Mammary epithelial cell (primary cell): ENCODE measurements at regions of chr15 and their contacts with region 1.

Region 1: GRCh38 chr15:66841953-66842681 is 140.1 kb downstream of the SMAD6 start:
- DNase-seq: peak; percentile 86
- H3K4me3 ChIP-seq: peak overlapping the region; percentile 14 to 42 (median 40)
- H3K27ac ChIP-seq: peak overlapping the region; percentile 50
- H3K4me1 ChIP-seq: peaks cover 12% of the 10 kb centered on the region
- H3K27me3 ChIP-seq: no peaks in the 10 kb centered on the region
- CTCF ChIP-seq: no peak

Region 2: DNA sequence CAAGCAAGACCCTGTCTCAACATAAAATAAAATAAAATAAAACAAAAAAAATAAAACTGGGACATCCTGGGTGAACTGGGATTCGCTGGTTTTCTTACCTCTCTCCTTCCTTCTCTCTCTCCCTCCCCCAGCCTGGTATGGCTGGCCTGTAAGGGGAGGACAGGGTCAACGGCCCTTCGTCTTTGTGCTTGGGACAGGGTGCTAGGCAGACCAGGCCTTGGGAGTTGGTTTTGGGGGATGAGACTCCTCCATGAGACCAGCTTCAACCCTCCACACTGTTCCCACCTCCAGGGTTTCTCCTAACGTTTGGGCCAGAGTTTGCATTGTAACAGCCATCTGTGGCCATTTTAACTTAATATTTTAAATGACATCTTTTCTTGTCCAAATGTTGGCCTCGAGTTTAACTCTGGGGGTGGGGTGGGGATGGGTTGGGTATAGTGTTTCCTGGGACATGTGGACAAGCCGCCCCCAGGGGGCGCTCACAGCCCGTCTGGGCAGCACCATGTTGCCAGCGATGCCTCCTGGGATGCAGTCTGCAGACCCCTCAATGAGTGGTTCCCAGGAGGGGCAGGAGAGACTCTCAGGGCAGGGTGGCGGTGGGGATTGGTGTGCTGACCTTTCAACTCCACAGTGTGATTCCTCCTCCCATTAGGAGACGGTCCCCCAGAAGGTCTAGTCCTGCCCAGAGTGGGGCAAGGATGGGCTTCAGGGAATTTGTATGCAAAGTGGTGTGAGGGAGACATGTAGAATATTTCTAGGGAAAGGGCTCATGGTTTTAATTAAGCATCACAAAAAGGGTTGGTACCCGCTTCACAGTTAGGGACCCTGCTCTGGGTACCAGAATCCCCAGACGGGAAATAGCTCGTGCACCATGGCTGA is 238.6 kb before region 1 on chr15:
- CTCF ChIA-PET with region 1: no interaction called
- dilution Hi-C with region 1: no loop called
- in situ Hi-C with region 1: loop called in 1 of 2 experiments (anchors 10 kb)
- intact Hi-C with region 1: no loop called
- DNase-seq: peak; percentile 17
- H3K4me3 ChIP-seq: no peak overlapping the region
- H3K27ac ChIP-seq: no peak overlapping the region
- H3K4me1 ChIP-seq: no peaks in the 10 kb centered on the region
- H3K27me3 ChIP-seq: no peaks in the 10 kb centered on the region
- CTCF ChIP-seq: peak; percentile 51 to 85

Region 3: DNA sequence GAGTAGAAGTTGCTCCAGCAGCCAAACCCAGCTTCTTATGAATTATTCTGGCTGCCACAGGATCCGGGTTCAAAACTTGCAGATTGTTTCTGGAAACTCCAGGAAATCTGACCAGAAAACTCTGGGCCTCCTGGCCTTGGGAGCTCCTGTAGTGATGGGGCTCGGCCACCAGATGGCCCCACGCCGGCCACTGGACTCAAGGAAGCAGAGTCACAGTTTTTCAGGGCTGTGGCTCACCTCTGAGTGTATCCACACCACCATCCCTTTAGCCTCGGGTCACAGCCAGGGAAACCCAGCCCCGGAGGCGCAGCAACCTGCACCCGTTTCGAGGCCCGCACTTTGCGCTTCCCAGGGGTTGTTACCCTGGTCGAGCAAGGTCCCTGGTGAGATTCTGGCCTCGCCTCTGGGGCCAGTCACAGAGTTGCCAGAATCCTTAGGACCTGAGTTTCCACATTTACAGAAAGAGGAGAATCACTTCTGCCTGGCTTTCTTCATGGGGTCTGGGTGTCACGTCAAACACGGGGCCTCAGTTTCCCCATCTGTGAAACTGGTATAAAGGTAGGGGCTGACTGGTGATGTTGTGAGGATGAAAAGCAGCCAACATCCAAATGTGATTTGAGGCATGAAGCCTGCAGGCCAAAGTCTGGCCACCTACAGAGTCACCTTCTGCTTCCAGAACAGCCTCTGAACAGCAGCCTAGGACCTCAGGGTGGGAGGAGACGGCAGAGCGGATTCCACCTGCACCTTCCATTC is 222.8 kb before region 1 on chr15:
- CTCF ChIA-PET with region 1: no interaction called
- dilution Hi-C with region 1: loop called (anchors 5 kb)
- in situ Hi-C with region 1: loop called in 1 of 2 experiments (anchors 10 kb)
- intact Hi-C with region 1: no loop called
- DNase-seq: peak; percentile 57
- H3K4me3 ChIP-seq: no peak overlapping the region
- H3K27ac ChIP-seq: no peak overlapping the region
- H3K4me1 ChIP-seq: peaks cover 4% of the 10 kb centered on the region
- H3K27me3 ChIP-seq: peaks cover 11% of the 10 kb centered on the region
- CTCF ChIP-seq: peak; percentile 77 to 92

Region 4: DNA sequence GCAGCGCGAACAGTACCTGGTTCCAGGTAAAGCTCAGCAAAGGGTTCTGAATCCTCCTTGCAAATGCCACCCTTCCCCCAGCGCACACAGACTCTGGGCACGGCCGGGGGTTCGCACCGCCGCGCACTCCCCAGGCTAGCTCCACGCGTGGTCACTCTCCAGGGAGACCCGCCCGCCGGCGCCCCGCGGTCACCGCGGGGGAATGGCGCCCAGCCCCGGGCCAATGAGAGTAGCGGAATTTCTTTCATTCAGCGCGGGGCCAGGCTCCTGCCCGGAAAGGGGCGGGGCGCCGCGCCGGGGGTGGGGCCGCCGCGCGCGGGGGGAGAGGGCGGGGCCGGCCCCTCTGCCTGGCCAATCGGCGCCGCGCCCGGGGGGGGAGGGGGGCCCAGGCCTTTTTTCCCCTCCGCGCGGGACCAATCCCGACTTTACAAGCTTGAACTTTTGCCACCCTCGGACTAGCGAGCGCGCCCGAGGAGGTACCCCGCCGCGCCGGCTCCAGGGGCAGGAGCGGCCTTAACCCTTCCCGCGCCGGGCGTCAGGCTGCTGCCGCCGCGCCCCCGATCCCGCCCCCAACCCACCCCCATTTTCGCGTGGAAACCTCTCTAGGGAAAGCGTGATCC is 141.2 kb before region 1 on chr15:
- CTCF ChIA-PET with region 1: no interaction called
- dilution Hi-C with region 1: no loop called
- in situ Hi-C with region 1: no loop called
- intact Hi-C with region 1: loop called (anchors 2 kb)
- DNase-seq: peak; percentile 89
- H3K4me3 ChIP-seq: peak overlapping the region; percentile 56 to 65 (median 62)
- H3K27ac ChIP-seq: no peak overlapping the region
- H3K4me1 ChIP-seq: peaks cover 30% of the 10 kb centered on the region
- H3K27me3 ChIP-seq: peaks cover 8% of the 10 kb centered on the region
- CTCF ChIP-seq: no peak

Region 5: DNA sequence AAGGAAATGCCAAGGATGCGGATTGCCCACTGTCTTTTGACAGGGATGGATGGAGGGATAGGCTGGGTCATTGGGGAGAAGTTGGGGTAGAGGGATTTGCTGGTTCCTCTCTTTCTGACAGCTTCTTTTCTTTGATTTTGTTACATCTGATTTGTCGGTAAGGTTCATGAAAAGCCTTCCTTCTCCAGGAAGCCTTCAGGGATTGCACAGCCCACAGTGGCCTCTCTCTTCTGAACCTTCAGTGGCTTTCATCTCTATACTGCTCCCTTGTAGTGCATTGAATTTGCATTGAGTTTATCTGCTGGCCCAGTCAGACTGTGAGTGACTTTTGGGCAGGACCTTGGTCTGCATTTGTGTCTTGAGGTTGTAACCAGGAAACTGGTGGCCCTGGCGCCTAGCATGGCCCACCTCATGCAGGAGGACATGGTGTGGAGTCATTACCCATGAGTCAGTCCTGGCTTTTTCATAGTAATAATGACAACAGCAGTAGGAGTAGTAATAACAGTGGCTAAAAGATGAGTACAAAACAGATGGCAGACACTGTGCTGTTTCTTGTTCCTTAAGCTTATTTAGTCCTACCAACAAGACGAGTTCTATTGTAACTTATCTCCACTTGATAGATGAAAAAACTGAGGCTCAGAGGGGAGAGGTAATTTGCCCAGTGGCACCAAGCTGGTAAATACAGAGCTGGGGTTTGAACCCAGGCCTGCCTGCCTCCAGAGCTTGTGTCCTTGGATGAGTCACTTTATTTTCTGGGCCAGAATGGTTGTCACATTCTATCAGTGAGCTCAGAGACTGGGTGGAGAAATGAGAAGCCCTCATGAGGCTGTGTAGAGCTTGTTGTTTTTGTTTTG is 111.7 kb before region 1 on chr15:
- CTCF ChIA-PET with region 1: no interaction called
- dilution Hi-C with region 1: no loop called
- in situ Hi-C with region 1: no loop called
- intact Hi-C with region 1: no loop called
- DNase-seq: peak; percentile 21
- H3K4me3 ChIP-seq: no peak overlapping the region
- H3K27ac ChIP-seq: no peak overlapping the region
- H3K4me1 ChIP-seq: peaks cover 5% of the 10 kb centered on the region
- H3K27me3 ChIP-seq: no peaks in the 10 kb centered on the region
- CTCF ChIP-seq: no peak

Region 6: GRCh38 chr15:66789029-66790025 is 52.8 kb before region 1 on chr15:
- CTCF ChIA-PET with region 1: no interaction called
- dilution Hi-C with region 1: loop called (anchors 5 kb)
- in situ Hi-C with region 1: loop called in 1 of 2 experiments (anchors 10 kb)
- intact Hi-C with region 1: loop called (anchors 2 kb)
- DNase-seq: no peak
- H3K4me3 ChIP-seq: no peak overlapping the region
- H3K27ac ChIP-seq: no peak overlapping the region
- H3K4me1 ChIP-seq: no peaks in the 10 kb centered on the region
- H3K27me3 ChIP-seq: no peaks in the 10 kb centered on the region
- CTCF ChIP-seq: peak; percentile 50 to 63

Region 7: DNA sequence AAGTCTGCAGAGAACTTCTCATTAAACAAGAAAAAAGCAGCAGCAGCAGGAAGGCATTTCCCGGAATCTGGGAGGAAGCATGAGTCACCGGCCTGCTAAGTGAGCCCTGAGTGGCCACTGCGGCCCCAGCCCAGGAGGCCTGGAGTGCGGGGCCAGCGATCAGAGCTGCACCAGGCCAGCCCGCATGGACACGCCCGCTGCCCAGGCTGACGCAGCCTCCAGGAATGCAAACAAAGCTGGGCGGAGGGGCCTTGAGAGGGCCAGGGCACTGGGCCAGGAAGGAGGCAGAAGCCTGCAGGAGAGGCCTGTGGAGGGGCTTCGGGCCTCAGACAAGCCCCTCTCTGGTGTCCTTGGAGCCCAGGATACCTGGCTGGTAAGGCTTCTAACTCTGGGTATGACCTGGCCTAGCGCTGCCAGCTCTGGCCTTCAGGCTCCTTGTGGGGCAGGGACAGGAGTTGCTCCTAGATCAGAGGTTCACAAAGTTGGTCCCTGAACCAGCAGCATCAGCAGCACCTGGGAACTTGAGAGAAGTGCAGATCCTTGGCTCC is 38.9 kb before region 1 on chr15:
- CTCF ChIA-PET with region 1: no interaction called
- dilution Hi-C with region 1: no loop called
- in situ Hi-C with region 1: no loop called
- intact Hi-C with region 1: loop called (anchors 2 kb)
- DNase-seq: peak; percentile 87
- H3K4me3 ChIP-seq: no peak overlapping the region
- H3K27ac ChIP-seq: no peak overlapping the region
- H3K4me1 ChIP-seq: peaks cover 21% of the 10 kb centered on the region
- H3K27me3 ChIP-seq: no peaks in the 10 kb centered on the region
- CTCF ChIP-seq: no peak